ENCODE measurements at regions of chr21 and their contacts with region 1.

Region 1: DNA sequence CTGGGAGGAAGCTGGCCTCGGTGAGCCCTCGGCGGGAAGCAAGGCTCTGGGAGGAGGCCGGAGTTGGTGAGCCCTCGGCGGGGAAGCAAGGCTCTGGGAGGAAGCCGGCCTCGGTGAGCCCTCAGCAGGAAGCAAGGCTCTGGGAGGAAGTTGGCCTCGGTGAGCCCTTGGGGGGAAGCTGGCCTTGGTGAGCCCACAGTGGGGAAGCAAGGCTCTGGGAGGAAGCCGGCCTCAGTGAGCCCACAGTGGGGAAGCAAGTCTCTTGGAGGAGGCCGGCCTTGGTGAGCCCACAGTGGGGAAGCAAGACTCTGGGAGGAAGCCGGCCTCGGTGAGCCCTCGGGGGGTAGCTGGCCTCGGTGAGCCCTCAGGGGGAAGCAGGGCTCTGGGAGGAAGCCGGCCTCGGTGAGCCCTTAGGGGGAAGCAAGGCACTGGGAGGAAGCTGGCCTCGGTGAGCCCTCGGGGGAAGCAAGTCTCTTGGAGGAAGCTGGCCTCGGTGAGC is 36.0 kb downstream of the KRTAP10-1 start:
- DNase-seq: no peak

Region 2: GRCh38 chr21:44478801-44479167 is 25.2 kb before region 1 on chr21:
- intact Hi-C with region 1: loop called in 1 of 2 experiments (anchors 1 kb)
- DNase-seq: peak; percentile 52

Region 3: DNA sequence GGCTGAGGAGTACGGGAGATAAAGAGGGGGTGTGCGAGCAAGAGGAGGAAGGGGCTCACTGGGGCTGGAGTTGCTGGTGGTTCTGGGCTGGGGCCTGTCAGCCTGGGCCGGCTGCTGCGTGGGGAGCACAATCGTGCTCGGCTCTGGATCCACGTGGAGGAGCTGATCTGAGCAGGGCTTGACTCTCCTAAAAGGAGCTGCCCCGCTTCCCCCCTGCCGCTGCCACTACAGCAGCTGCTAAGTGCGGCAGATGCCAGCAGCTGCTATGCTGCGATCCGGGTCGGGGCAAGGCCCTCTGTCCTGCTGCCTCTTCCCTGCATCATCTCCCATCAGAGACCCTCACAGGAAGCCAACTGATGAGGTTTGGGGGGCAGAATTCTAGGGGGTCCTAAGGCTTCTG is 1305.5 kb after region 1 on chr21:
- intact Hi-C with region 1: loop called in 1 of 2 experiments (anchors 5 kb)
- DNase-seq: peak; percentile 58

Measured in posterior vena cava (tissue), 2 donors.